Adrenal gland (tissue), 19 donors: ENCODE measurements at regions of chr6 and their contacts with region 1.

Region 1: DNA sequence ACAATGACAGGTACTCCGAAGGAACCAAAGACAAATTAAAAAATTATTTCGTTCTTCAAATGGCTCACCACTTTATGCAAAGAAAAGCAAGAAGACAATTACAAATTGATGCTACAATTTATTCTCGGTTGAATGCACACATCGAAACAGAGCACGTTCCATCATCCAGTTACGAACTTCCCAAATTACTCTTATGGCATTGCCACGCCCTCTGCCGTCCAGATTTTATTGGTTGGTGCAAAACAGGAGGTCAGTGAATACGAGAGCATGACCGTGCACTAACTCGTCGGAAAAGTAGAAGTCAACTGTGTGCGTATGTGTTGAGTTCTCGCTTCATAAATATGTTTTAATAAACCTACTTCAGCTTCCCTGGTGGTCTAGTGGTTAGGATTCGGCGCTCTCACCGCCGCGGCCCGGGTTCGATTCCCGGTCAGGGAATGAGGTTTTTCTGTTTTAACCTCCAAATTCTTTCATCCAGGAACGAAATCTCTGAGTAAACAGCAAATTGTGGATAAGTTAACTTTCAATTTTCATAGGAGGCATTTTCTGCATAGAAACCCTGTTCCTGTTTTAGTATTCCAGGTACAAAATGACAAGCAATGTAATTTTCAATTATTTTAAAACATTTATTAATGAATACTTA is 23.2 kb downstream of the ZNF311 start:
- DNase-seq: peak; percentile 75 to 95 (median 88)
- H3K4me3 ChIP-seq: peak overlapping the region in 2 of 4 donors; percentile 32 to 60
- H3K27ac ChIP-seq: peak overlapping the region; percentile 43 to 85 (median 70)
- H3K4me1 ChIP-seq: peaks cover 0 to 5% of the 10 kb centered on the region in 2 donors
- H3K27me3 ChIP-seq: no peaks in the 10 kb centered on the region
- CTCF ChIP-seq: peak in 3 of 6 experiments; percentile 10 to 25 (median 11)
- POLR2A ChIP-seq: no peak

Region 2: DNA sequence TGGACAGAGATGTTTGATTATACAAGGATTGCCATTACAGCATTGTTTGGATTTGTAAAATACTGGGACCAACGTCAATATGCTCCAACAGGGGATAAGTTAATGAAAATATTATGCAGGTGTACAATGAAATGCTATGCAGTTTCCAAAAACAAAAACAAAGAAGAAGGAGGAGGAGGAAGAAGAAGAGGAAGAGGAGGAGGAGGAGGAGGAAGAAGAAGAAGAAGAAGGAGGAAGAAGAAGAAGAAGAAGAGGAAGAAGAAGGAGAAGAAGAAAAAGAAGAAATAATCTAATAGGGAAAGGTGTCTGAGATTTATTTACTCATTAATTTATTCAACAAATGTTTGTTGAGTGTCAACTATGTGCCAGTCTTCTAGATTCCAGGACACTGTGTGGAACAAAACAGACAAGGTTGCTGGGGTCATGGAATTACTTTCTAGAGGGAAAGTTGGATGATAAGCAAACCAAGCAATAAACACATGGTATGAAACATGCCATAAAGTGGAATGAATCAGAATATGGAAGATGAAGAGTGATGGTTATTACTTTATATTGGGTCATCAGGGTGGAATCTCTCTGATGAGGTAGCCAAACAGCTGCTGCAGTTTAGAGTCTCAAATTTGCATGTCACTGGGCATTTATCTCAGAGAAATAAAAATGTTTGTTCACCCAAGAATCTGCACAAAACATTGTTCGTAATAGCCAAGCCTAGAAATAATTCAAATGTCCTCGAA is 51.9 kb before region 1 on chr6:
- intact Hi-C with region 1: loop called in 1 of 2 experiments (anchors 5 kb)
- DNase-seq: no peak
- H3K4me3 ChIP-seq: no peak overlapping the region
- H3K27ac ChIP-seq: no peak overlapping the region
- H3K4me1 ChIP-seq: no peaks in the 10 kb centered on the region
- H3K27me3 ChIP-seq: no peaks in the 10 kb centered on the region
- CTCF ChIP-seq: no peak
- POLR2A ChIP-seq: no peak

Region 3: DNA sequence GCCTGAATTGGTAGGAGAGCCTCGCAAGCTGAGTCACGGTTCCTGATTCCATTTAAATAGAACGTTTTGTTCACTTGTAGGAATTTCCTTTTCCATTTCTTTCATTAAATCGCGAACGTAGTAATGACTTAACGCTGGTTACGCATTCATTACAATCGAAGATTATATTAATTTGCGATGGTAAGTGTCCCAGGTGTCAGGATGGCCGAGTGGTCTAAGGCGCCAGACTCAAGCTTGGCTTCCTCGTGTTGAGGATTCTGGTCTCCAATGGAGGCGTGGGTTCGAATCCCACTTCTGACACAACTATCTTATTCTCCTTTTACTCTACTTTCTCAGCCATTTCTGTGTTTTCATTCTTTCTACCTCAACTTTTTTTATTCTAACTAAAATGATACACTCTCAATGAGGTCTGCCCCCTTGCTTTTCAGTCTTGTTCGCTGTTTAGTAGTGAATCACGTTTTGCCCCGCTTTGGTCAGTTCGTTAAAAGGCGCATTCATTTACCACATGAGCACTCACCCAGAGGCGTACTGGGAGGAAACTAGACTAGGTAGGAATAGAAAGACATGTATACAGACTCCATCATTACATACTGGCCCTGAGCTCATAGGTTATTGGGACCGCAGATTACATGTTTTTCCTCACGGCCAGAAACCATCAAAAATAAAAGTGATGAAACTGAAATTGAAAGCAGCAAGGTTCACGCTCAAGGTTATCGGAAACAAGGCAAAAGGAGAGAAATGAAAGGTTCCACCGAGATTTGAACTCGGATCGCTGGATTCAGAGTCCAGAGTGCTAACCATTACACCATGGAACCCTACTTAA is 40.9 kb before region 1 on chr6:
- intact Hi-C with region 1: loop called (anchors 5 kb)
- DNase-seq: peak; percentile 76 to 93 (median 79)
- H3K4me3 ChIP-seq: peak overlapping the region; percentile 21 to 64 (median 40)
- H3K27ac ChIP-seq: peak overlapping the region; percentile 12 to 79 (median 69)
- H3K4me1 ChIP-seq: peaks cover 0 to 13% of the 10 kb centered on the region in 2 donors
- H3K27me3 ChIP-seq: no peaks in the 10 kb centered on the region
- CTCF ChIP-seq: no peak
- POLR2A ChIP-seq: no peak